ENCODE measurements at regions of chr2 and their contacts with region 1.

Region 1: GRCh38 chr2:66434679-66435548 is at the start of gene MEIS1:
- DNase-seq: peak; percentile 92 to 96 (median 94)
- ATAC-seq: peak; percentile 94 to 95
- H3K4me3 ChIP-seq: peak within 1 kb of the TSS; percentile 86
- H3K27ac ChIP-seq: peak within 1 kb of the TSS; percentile 88
- H3K4me1 ChIP-seq: no peaks in the 10 kb centered on the region
- H3K27me3 ChIP-seq: no peaks in the 10 kb centered on the region
- total RNA-seq, gene MEIS1: 20.4 to 41.2 (median 33.6) TPM

Region 2: GRCh38 chr2:66495788-66496640 is 61.1 kb after region 1 on chr2:
- intact Hi-C with region 1: loop called in 3 of 4 experiments (anchors 10 kb)
- DNase-seq: peak; percentile 44 to 68 (median 55)
- ATAC-seq: peak; percentile 71 to 83
- H3K4me3 ChIP-seq: no peak overlapping the region
- H3K27ac ChIP-seq: peak overlapping the region; percentile 79
- H3K4me1 ChIP-seq: peaks cover 12% of the 10 kb centered on the region
- H3K27me3 ChIP-seq: no peaks in the 10 kb centered on the region

Region 3: GRCh38 chr2:66574701-66575624 is 140.0 kb after region 1 on chr2:
- intact Hi-C with region 1: loop called in 2 of 4 experiments (anchors 5 kb)
- DNase-seq: peak; percentile 50 to 78 (median 76)
- ATAC-seq: peak; percentile 79 to 83
- H3K4me3 ChIP-seq: peak overlapping the region; percentile 83
- H3K27ac ChIP-seq: peak overlapping the region; percentile 36
- H3K4me1 ChIP-seq: no peaks in the 10 kb centered on the region
- H3K27me3 ChIP-seq: peaks cover 2% of the 10 kb centered on the region

Region 4: GRCh38 chr2:66702301-66702700 is 267.4 kb after region 1 on chr2:
- intact Hi-C with region 1: no loop called
- DNase-seq: no peak
- ATAC-seq: no peak
- H3K4me3 ChIP-seq: no peak overlapping the region
- H3K27ac ChIP-seq: no peak overlapping the region
- H3K4me1 ChIP-seq: no peaks in the 10 kb centered on the region
- H3K27me3 ChIP-seq: no peaks in the 10 kb centered on the region

Region 5: DNA sequence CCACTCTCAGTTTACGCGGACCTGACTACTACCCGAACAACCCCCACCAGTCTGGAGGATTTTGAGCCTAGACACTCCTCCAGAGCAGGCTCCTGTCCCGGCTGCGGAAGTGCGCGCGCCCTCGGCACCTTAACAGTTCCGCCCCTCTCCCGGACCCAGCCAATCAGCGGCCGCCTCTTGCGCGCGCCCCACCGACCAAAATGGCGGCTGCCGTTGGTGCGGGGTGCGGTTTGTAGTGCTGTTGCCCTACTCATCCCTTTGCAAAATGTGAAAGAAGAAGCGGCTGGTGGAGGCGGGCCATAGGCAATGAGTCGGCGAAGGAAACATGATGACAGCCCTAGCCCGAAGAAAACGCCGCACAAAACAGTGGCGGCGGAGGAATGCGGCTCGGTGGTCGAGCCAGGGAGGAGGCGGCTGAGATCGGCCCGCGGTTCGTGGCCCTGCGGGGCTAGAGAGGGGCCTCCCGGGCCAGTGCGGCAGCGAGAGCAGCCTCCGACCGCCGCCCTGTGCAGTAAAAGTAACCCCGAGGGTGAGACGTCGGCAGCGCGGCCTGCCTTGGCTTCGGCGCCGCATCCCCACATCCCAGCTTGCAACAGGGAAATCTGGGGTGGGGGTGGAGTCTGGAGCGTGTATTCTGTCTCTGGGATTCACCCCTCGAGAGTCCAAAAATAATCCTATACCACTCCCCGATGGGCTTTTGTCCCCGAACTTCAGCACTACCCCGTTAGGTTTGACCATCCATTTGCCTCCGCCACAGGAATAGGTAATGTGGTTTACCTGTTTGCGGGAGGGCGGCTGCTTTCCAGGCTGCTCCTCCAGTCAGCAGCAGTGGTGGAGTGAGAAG is 962.5 kb after region 1 on chr2 and contains the start of gene ETAA1:
- intact Hi-C with region 1: loop called in 1 of 4 experiments (anchors 10 kb)
- DNase-seq: peak; percentile 94 to 98 (median 97)
- ATAC-seq: peak; percentile 100
- H3K4me3 ChIP-seq: peak within 1 kb of the TSS; percentile 98
- H3K27ac ChIP-seq: peak within 1 kb of the TSS; percentile 76
- H3K4me1 ChIP-seq: no peaks in the 10 kb centered on the region
- H3K27me3 ChIP-seq: no peaks in the 10 kb centered on the region
- total RNA-seq, gene ETAA1: 4.6 to 6.3 (median 5.6) TPM

Region 6: GRCh38 chr2:67650291-67651133 is 1215.6 kb after region 1 on chr2:
- intact Hi-C with region 1: loop called in 1 of 4 experiments (anchors 10 kb)
- DNase-seq: peak; percentile 83 to 90 (median 90)
- ATAC-seq: peak; percentile 92 to 94
- H3K4me3 ChIP-seq: no peak overlapping the region
- H3K27ac ChIP-seq: peak overlapping the region; percentile 49
- H3K4me1 ChIP-seq: peaks cover 7% of the 10 kb centered on the region
- H3K27me3 ChIP-seq: no peaks in the 10 kb centered on the region

Measured in right cardiac atrium (tissue), 5 donors.